HepG2 (cell line): ENCODE measurements at regions of chr6 and their contacts with region 1.

Region 1: GRCh38 chr6:30672445-30673253 is at the start of gene DHX16:
- DNase-seq: peak; percentile 97
- ATAC-seq: peak; percentile 89
- H3K4me3 ChIP-seq: peak within 1 kb of the TSS; percentile 76 to 95 (median 82)
- H3K27ac ChIP-seq: peak within 1 kb of the TSS; percentile 67
- H3K4me1 ChIP-seq: peaks cover 23% of the 10 kb centered on the region
- H3K27me3 ChIP-seq: no peaks in the 10 kb centered on the region; a peak in 1 of 5 replicates
- CTCF ChIP-seq: peak; percentile 91
- EP300 ChIP-seq: peak in 1 of 2 experiments; percentile 53; a peak in 3 of 4 replicates
- POLR2A ChIP-seq: peak; percentile 79 to 81
- RAD21 ChIP-seq: peak; percentile 71
- total RNA-seq, gene DHX16: 48.2 and 58.5 TPM in 2 replicates

Region 2: GRCh38 chr6:30483677-30484279 is 188.9 kb before region 1 on chr6:
- CTCF ChIA-PET with region 1: interaction called, 6 read pairs
- POLR2A ChIA-PET with region 1: no interaction called
- in situ Hi-C with region 1: loop called (anchors 5 kb)
- intact Hi-C with region 1: no loop called
- DNase-seq: peak; percentile 66
- ATAC-seq: no peak
- H3K4me3 ChIP-seq: no peak overlapping the region
- H3K27ac ChIP-seq: no peak overlapping the region
- H3K4me1 ChIP-seq: peaks cover 26% of the 10 kb centered on the region
- H3K27me3 ChIP-seq: peaks cover 0 to 29% of the 10 kb centered on the region in 2 experiments; a peak in 3 of 5 replicates
- CTCF ChIP-seq: peak; percentile 81
- EP300 ChIP-seq: no peak
- POLR2A ChIP-seq: no peak
- RAD21 ChIP-seq: peak; percentile 58; the same call in 1 of the 2 replicates

Region 3: GRCh38 chr6:30541515-30542403 is 130.9 kb before region 1 on chr6:
- CTCF ChIA-PET with region 1: no interaction called
- POLR2A ChIA-PET with region 1: interaction called, 4 read pairs
- in situ Hi-C with region 1: no loop called
- intact Hi-C with region 1: loop called (anchors 10 kb)
- DNase-seq: peak; percentile 76
- ATAC-seq: peak; percentile 88
- H3K4me3 ChIP-seq: peak overlapping the region; percentile 30 to 66 (median 44); a peak in 5 of 6 replicates
- H3K27ac ChIP-seq: no peak overlapping the region
- H3K4me1 ChIP-seq: peaks cover 7% of the 10 kb centered on the region; the same call in 1 of the 2 replicates
- H3K27me3 ChIP-seq: no peaks in the 10 kb centered on the region
- CTCF ChIP-seq: peak; percentile 94
- EP300 ChIP-seq: no peak
- POLR2A ChIP-seq: no peak
- RAD21 ChIP-seq: peak; percentile 78

Region 4: DNA sequence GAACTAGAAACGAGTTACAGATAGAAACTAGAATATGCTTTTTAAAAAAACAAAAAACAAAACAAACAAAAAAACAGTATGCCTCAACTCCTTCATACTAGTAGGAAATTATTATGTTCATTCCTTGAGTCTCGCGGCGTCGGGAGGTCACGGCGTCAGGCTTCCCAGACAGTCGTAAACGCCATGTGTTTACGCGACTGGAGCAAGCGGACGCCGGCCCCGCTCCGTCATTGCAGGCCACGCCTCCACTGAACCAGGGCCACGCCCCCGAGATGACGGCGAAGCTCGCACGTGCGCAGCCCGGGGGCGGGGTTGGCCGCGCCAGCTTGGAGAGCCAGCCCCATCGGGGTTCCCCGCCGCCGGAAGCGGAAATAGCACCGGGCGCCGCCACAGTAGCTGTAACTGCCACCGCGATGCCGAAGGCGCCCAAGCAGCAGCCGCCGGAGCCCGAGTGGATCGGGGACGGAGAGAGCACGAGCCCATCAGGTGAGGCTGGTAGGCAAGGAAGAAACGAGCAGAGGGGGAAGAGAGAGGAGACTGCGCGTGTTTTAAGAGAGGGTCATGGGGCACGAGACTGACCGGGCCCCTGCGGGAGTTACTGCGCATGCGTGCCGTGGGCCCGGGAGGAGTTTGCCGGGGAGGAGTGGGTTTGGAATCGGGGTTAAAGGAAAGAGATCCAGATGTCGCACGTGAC is 101.4 kb before region 1 on chr6 and contains the start of gene ABCF1:
- CTCF ChIA-PET with region 1: no interaction called
- POLR2A ChIA-PET with region 1: interaction called, 5 read pairs
- in situ Hi-C with region 1: no loop called
- intact Hi-C with region 1: loop called (anchors 1 kb)
- DNase-seq: peak; percentile 94
- ATAC-seq: peak; percentile 92
- H3K4me3 ChIP-seq: peak within 1 kb of the TSS; percentile 67 to 88 (median 71)
- H3K27ac ChIP-seq: peak within 1 kb of the TSS; percentile 80
- H3K4me1 ChIP-seq: peaks cover 51% of the 10 kb centered on the region
- H3K27me3 ChIP-seq: no peaks in the 10 kb centered on the region; a peak in 1 of 5 replicates
- CTCF ChIP-seq: peak; percentile 18; the same call in 1 of the 2 replicates
- EP300 ChIP-seq: peak in 1 of 2 experiments; percentile 26; a peak in 1 of 4 replicates
- POLR2A ChIP-seq: peak; percentile 88 to 95
- RAD21 ChIP-seq: no peak
- total RNA-seq, gene ABCF1: 98.9 and 104 TPM in 2 replicates

Region 5: GRCh38 chr6:30626484-30627366 is 45.9 kb before region 1 on chr6 and contains the start of gene ATAT1:
- CTCF ChIA-PET with region 1: interaction called, 21 read pairs
- POLR2A ChIA-PET with region 1: interaction called, 8 read pairs
- in situ Hi-C with region 1: loop called (anchors 5 kb)
- intact Hi-C with region 1: loop called (anchors 1 kb)
- DNase-seq: peak; percentile 88
- ATAC-seq: peak; percentile 98
- H3K4me3 ChIP-seq: peak within 1 kb of the TSS; percentile 69 to 92 (median 72)
- H3K27ac ChIP-seq: peak within 1 kb of the TSS; percentile 76
- H3K4me1 ChIP-seq: peaks cover 17% of the 10 kb centered on the region
- H3K27me3 ChIP-seq: no peaks in the 10 kb centered on the region; a peak in 1 of 5 replicates
- CTCF ChIP-seq: peak; percentile 87
- EP300 ChIP-seq: peak in 1 of 2 experiments; percentile 36; a peak in 2 of 4 replicates
- POLR2A ChIP-seq: peak; percentile 88 to 97
- RAD21 ChIP-seq: peak; percentile 74
- total RNA-seq, gene ATAT1: 5.4 and 9.2 TPM in 2 replicates

Region 6: GRCh38 chr6:30646458-30647241 is 26.0 kb before region 1 on chr6 and contains the start of gene C6orf136:
- CTCF ChIA-PET with region 1: no interaction called
- POLR2A ChIA-PET with region 1: interaction called, 6 read pairs
- in situ Hi-C with region 1: no loop called
- intact Hi-C with region 1: loop called (anchors 2 kb)
- DNase-seq: peak; percentile 91
- ATAC-seq: peak; percentile 73
- H3K4me3 ChIP-seq: peak within 1 kb of the TSS; percentile 67 to 98 (median 94)
- H3K27ac ChIP-seq: peak within 1 kb of the TSS; percentile 88
- H3K4me1 ChIP-seq: peaks cover 38% of the 10 kb centered on the region
- H3K27me3 ChIP-seq: no peaks in the 10 kb centered on the region; a peak in 1 of 5 replicates
- CTCF ChIP-seq: 0 out of 2 replicates have a peak, but pooled peaks have one; percentile 10
- EP300 ChIP-seq: no peak
- POLR2A ChIP-seq: no peak
- RAD21 ChIP-seq: no peak
- total RNA-seq, gene C6orf136: 9.2 and 12.0 TPM in 2 replicates

Region 7: GRCh38 chr6:30656513-30656912 is 16.1 kb before region 1 on chr6:
- CTCF ChIA-PET with region 1: no interaction called
- POLR2A ChIA-PET with region 1: interaction called, 26 read pairs
- in situ Hi-C with region 1: no loop called
- intact Hi-C with region 1: loop called (anchors 2 kb)
- DNase-seq: no peak
- ATAC-seq: no peak
- H3K4me3 ChIP-seq: no peak overlapping the region
- H3K27ac ChIP-seq: peak overlapping the region; percentile 80
- H3K4me1 ChIP-seq: peaks cover 53% of the 10 kb centered on the region
- H3K27me3 ChIP-seq: no peaks in the 10 kb centered on the region
- CTCF ChIP-seq: no peak
- EP300 ChIP-seq: no peak
- POLR2A ChIP-seq: no peak
- RAD21 ChIP-seq: no peak